ENCODE measurements at regions of chr7 and their contacts with region 1.

Region 1: GRCh38 chr7:27196287-27196767 is 3.6 kb downstream of the HOXA13 start:
- DNase-seq: peak; percentile 89 to 99 (median 95)
- ATAC-seq: peak; percentile 6
- H3K4me3 ChIP-seq: no peak overlapping the region
- H3K4me1 ChIP-seq: peaks cover 19% of the 10 kb centered on the region
- CTCF ChIP-seq: peak; percentile 38

Region 2: DNA sequence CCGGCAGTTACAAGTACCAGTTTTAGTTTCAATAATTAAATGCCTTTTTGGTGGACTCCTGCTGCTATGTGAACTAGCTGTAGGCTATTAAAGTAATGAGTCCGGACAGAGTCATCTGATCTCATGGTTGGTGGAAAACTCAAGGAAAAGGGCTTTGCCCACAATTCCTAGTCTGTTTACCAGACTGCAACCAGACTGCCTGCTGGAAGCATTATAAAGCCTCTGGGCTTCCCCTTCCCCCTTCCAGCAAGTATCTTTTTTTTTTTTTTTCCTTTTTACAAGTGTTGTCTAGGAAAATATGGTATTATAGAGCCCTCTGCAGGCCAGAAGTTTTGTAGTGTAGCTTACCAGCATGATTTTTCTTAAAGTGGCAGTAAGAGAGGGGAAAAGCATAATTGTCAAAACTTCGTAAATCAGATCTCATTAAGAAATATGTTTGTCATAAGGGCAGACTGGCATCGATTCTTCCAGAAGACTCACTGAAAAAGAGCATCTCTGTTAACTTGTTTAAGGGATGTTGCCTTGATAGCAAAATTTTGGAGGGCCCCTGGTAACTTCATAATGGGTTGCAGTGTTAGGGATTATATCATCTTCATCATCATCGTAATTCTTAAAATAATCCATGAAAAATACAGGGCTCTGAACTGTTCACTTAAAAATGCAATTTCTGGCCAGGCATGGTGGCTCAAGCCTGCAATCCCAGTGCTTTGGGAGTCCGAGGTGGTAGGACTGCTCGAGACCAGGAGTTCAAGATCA is 724.9 kb after region 1 on chr7:
- intact Hi-C with region 1: loop called in 1 of 2 experiments (anchors 10 kb)
- DNase-seq: peak in 1 of 3 donors; percentile 85
- ATAC-seq: peak; percentile 88
- H3K4me3 ChIP-seq: no peak overlapping the region
- H3K4me1 ChIP-seq: peaks cover 7% of the 10 kb centered on the region
- CTCF ChIP-seq: peak; percentile 15

Region 3: GRCh38 chr7:28020302-28020940 is 824.1 kb after region 1 on chr7:
- intact Hi-C with region 1: loop called in 1 of 2 experiments (anchors 10 kb)
- DNase-seq: peak; percentile 51 to 74 (median 61)
- ATAC-seq: peak; percentile 97
- H3K4me3 ChIP-seq: no peak overlapping the region
- H3K4me1 ChIP-seq: no peaks in the 10 kb centered on the region
- CTCF ChIP-seq: peak; percentile 70

Measured in mucosa of descending colon (tissue), 3 donors.